ENCODE measurements at regions of chr2 and their contacts with region 1.

Region 1: DNA sequence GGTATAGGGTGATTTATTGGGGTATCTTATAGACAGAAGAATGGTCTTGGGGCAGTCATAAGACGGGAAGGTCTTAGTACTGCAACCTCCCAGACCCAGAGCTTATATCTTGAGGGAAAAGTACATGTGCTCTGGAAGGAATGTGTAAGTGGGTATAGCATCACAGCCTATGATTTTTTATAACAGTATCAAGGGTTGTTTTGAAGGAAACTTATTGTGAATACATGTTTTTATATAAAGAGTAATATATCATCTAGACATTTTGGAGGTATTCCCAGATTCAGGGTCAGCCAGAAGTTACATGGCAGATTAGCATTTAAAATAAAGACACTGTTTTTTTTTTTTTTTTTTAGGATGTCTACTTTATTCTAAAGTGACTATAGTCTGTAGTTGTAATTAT is 47.6 kb upstream of the STON1 start:
- DNase-seq: no peak
- H3K4me3 ChIP-seq: no peak overlapping the region
- H3K27ac ChIP-seq: peak overlapping the region in 1 of 2 donors; percentile 87
- H3K4me1 ChIP-seq: peaks cover 0 to 13% of the 10 kb centered on the region in 2 donors
- H3K27me3 ChIP-seq: no peaks in the 10 kb centered on the region
- CTCF ChIP-seq: no peak

Region 2: DNA sequence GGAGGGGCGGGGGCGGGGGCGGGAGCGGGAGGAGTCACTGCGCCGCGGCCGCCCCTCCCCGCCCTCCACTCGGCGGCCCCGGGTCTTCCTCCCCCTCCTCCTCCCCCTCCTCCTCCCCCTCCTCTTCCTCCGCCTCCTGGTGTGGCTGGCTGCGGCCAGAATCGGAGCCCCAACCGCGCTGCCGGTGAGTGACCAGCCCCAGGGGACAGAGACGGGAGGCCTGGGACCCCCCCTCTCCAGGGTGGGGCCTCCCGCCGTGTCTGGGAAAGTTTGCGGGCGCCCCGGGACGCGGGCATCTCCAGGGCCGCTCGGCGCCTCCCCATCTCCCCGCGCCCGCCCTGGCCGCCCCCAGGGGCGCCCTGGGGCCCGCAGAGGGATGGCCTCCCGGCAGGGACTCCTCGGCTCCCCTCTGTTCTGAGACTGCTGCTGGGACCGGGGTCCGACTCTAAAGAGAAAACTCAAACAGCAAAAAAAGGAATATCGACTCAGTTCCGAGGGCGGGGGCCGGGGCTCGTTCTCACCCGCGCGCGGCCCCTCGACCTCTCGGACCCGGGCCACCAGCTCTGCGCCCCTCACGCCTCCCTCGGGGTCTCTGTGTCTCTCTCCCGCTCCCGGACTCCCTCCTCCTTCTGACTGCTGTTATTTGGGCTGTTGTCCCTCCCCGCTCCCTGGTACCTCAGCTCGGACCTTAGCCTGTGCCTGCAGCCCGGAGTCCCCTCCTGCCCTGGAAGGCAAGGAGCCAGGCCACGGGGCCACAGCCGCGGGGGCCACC is 47.9 kb after region 1 on chr2 and contains the start of gene STON1:
- intact Hi-C with region 1: loop called (anchors 5 kb)
- DNase-seq: peak in 1 of 2 donors; percentile 75
- H3K4me3 ChIP-seq: peak within 1 kb of the TSS; percentile 78 to 93
- H3K27ac ChIP-seq: peak within 1 kb of the TSS; percentile 64 to 81
- H3K4me1 ChIP-seq: peaks cover 0 to 10% of the 10 kb centered on the region in 2 donors
- H3K27me3 ChIP-seq: no peaks in the 10 kb centered on the region
- CTCF ChIP-seq: peak in 2 of 3 experiments; percentile 13 to 25
- total RNA-seq, gene STON1: 23.4 TPM

Measured in ascending aorta (tissue), 2 donors.